ENCODE measurements at regions of chr19 and their contacts with region 1.

Region 1: DNA sequence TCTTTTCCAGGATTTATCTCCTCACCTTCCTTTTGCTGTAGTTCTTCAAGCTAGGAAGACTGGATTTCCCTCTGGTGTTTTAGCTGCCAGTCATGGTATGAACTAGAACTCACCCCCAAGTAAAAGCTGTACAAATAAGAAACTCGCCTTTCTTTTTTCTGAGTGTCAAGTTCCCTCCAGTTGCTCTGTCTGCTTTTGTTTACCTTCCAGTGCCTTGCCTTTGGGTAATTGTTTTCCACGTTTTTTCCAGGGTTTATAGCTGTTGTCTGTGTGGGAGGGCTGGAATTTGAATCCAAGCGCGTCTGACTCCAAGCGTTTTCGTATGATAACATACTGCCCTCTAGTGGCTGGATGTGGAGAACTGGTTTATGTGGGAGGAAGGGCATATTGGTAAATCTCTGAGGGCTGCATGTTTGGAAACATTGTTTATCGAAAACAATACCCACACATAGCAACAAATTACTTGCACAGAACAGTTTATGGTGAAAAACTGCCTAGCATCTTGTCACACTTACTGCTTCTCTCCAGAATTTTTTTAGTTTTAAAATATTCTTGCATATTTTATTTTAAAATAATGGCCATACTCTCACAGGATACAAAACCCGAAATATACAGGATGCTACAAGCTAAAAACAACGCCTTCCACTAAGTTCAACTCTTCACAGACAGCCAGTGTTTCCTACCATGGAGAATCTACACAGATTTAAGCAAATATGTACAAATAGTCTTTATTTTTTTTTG is 19.2 kb downstream of the RCN3 start:
- DNase-seq: peak; percentile 65 to 69
- H3K4me3 ChIP-seq: no peak overlapping the region
- H3K27ac ChIP-seq: no peak overlapping the region
- H3K4me1 ChIP-seq: no peaks in the 10 kb centered on the region
- H3K27me3 ChIP-seq: no peaks in the 10 kb centered on the region
- CTCF ChIP-seq: peak; percentile 74 to 93 (median 80)
- POLR2A ChIP-seq: no peak

Region 2: GRCh38 chr19:49056010-49056901 is 490.7 kb before region 1 on chr19:
- intact Hi-C with region 1: no loop called
- DNase-seq: peak; percentile 46 to 48
- H3K4me3 ChIP-seq: peak overlapping the region in 2 of 3 donors; percentile 30 to 33
- H3K27ac ChIP-seq: no peak overlapping the region
- H3K4me1 ChIP-seq: peaks cover 2 to 19% of the 10 kb centered on the region in 2 donors
- H3K27me3 ChIP-seq: no peaks in the 10 kb centered on the region
- CTCF ChIP-seq: peak in 2 of 6 experiments; percentile 9 to 26
- POLR2A ChIP-seq: no peak

Region 3: DNA sequence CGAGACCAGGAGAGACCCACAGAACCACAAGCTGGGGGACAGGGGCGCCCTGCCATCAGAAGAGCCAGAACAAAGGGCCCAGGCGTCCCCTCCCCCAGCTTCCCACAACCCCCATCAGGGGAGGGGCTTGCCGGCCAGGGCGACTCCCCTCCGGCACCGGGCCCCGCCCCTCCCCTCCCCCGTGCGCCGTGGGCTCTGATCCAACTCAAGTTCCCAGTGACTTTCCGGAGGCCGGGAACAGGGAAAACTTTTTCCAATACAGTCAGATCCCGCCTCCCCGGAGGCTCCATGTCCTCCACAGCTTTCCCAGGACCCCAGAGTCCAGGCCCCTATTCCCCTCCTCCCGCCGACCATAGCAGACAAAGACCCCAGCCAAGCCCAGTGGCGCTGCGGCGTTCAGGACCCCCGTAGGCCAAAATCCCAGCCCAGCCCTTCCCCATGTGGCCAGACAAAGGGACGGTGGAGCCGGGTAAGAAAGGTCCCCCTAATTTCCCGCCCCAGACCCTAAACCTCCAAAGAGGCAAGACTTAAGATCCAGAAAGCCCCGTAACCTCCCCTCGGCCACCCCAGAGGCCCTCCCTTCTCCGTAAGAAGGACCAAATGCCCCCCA is 185.5 kb before region 1 on chr19:
- intact Hi-C with region 1: no loop called
- DNase-seq: peak; percentile 58 to 60
- H3K4me3 ChIP-seq: peak overlapping the region in 2 of 3 donors; percentile 27 to 62
- H3K27ac ChIP-seq: peak overlapping the region; percentile 84 to 89 (median 89)
- H3K4me1 ChIP-seq: peaks cover 8 to 17% of the 10 kb centered on the region in 2 donors
- H3K27me3 ChIP-seq: no peaks in the 10 kb centered on the region
- CTCF ChIP-seq: no peak
- POLR2A ChIP-seq: peak in 1 of 2 donors; percentile 25

Region 4: GRCh38 chr19:49502866-49503581 is 44.0 kb before region 1 on chr19:
- intact Hi-C with region 1: loop called (anchors 2 kb)
- DNase-seq: peak; percentile 33 to 47
- H3K4me3 ChIP-seq: no peak overlapping the region
- H3K27ac ChIP-seq: peak overlapping the region in 1 of 3 donors; percentile 13
- H3K4me1 ChIP-seq: peaks cover 4 to 18% of the 10 kb centered on the region in 2 donors
- H3K27me3 ChIP-seq: no peaks in the 10 kb centered on the region
- CTCF ChIP-seq: peak; percentile 17 to 76 (median 51)
- POLR2A ChIP-seq: no peak